ENCODE measurements at regions of chr7 and their contacts with region 1.

Region 1: GRCh38 chr7:138738551-138739335 is 37.6 kb upstream of the SVOPL start:
- ATAC-seq: peak; percentile 86 to 99 (median 96)
- H3K4me3 ChIP-seq: no peak overlapping the region
- H3K27ac ChIP-seq: no peak overlapping the region
- H3K4me1 ChIP-seq: peaks cover 0 to 3% of the 10 kb centered on the region in 2 donors

Region 2: GRCh38 chr7:138125598-138126111 is 613.1 kb before region 1 on chr7:
- in situ Hi-C with region 1: loop called in 1 of 9 experiments (anchors 25 kb)
- ATAC-seq: peak in 5 of 8 experiments; percentile 42 to 79 (median 62)
- H3K4me3 ChIP-seq: no peak overlapping the region
- H3K27ac ChIP-seq: no peak overlapping the region
- H3K4me1 ChIP-seq: peaks cover 0 to 2% of the 10 kb centered on the region in 2 donors

Region 3: DNA sequence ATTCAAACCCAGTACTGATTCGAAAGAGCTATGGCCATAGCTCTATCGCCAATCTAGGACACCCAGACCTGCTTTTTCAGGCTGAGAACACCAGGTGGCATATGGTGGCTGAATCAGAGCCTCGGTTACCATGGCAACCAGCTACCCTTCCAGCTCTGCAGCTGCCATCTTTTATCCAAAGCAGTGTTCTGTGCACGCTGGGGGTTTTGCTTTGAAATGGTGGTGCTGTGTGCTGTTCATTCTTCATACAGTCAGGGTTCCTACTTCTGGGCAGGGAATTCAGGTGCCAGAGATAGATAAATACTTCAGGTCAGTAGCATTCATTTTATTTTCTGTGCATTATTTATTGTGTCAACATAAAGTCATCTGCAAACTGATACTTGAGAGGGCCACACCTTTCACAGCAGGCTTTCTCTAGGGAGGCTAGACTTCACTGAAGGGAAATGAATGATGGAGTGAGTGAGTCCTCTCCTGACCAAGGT is 577.1 kb before region 1 on chr7:
- in situ Hi-C with region 1: loop called in 5 of 9 experiments (anchors 10 to 25 kb)
- ATAC-seq: peak; percentile 96 to 99 (median 98)
- H3K4me3 ChIP-seq: peak overlapping the region in 4 of 5 donors; percentile 12 to 24 (median 22)
- H3K27ac ChIP-seq: peak overlapping the region; percentile 63
- H3K4me1 ChIP-seq: peaks cover 8 to 13% of the 10 kb centered on the region in 2 donors